Heart left ventricle (tissue), 16 donors: ENCODE measurements at regions of chr16 and their contacts with region 1.

Region 1: GRCh38 chr16:54204756-54205155 is 81.8 kb downstream of the IRX3 start:
- DNase-seq: no peak
- ATAC-seq: no peak
- H3K4me3 ChIP-seq: no peak overlapping the region
- H3K27ac ChIP-seq: no peak overlapping the region
- H3K4me1 ChIP-seq: peaks cover 0 to 3% (median 0%) of the 10 kb centered on the region in 12 donors
- H3K27me3 ChIP-seq: no peaks in the 10 kb centered on the region
- CTCF ChIP-seq: no peak
- POLR2A ChIP-seq: no peak

Region 2: DNA sequence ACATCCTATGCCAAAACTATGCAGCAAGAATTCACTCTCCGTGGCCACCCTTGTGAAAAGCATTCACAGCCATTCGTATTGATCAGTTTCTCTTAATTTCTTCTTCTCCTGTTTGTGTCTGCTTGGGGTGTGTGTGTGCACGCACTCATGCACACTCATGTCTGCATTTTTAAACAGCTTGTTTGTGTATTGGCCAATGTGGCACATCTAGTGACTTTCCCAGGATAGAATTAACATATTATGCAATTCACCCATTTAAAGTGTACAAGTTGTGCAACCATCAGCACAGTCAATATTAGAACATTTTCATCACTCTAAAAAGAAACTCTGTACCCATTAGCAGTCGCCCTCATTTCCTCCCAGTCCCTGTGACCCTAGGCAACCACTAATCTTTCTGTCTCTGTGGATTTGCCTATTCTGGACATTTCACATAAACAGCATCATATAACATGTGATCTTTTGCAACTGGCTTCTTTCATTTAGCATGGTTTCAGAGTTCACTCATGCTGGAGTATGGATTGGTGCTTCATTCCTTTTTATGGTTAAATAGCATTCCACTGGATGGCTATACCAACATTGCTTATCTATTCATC is 61.7 kb after region 1 on chr16:
- intact Hi-C with region 1: loop called in 1 of 10 experiments (anchors 5 kb)
- DNase-seq: no peak
- ATAC-seq: peak in 3 of 4 donors; percentile 32 to 50 (median 47)
- H3K4me3 ChIP-seq: no peak overlapping the region
- H3K27ac ChIP-seq: peak overlapping the region in 11 of 12 donors; percentile 33 to 86 (median 71)
- H3K4me1 ChIP-seq: peaks cover 0 to 25% (median 12%) of the 10 kb centered on the region in 12 donors
- H3K27me3 ChIP-seq: no peaks in the 10 kb centered on the region
- CTCF ChIP-seq: no peak
- POLR2A ChIP-seq: no peak

Region 3: GRCh38 chr16:54407596-54407995 is 202.8 kb after region 1 on chr16:
- intact Hi-C with region 1: no loop called
- DNase-seq: no peak
- ATAC-seq: no peak
- H3K4me3 ChIP-seq: no peak overlapping the region
- H3K27ac ChIP-seq: no peak overlapping the region
- H3K4me1 ChIP-seq: peaks cover 0 to 21% (median 11%) of the 10 kb centered on the region in 12 donors
- H3K27me3 ChIP-seq: peaks cover 0 to 3% (median 0%) of the 10 kb centered on the region in 9 donors
- CTCF ChIP-seq: no peak
- POLR2A ChIP-seq: no peak

Region 4: GRCh38 chr16:54817446-54817845 is 612.7 kb after region 1 on chr16:
- intact Hi-C with region 1: loop called in 2 of 10 experiments (anchors 5 to 10 kb)
- DNase-seq: peak in 2 of 5 donors; percentile 8 to 33
- ATAC-seq: peak in 3 of 4 donors; percentile 47 to 69 (median 69)
- H3K4me3 ChIP-seq: no peak overlapping the region
- H3K27ac ChIP-seq: no peak overlapping the region
- H3K4me1 ChIP-seq: peaks cover 0 to 6% (median 0%) of the 10 kb centered on the region in 12 donors
- H3K27me3 ChIP-seq: peaks cover 0 to 7% (median 0%) of the 10 kb centered on the region in 9 donors
- CTCF ChIP-seq: peak in 9 of 12 donors; percentile 6 to 55 (median 42)
- POLR2A ChIP-seq: no peak